Lower leg skin (tissue), 4 donors: ENCODE measurements at regions of chr5 and their contacts with region 1.

Region 1: GRCh38 chr5:50318220-50318619 is 122.9 kb downstream of the EMB start:
- DNase-seq: no peak
- H3K4me3 ChIP-seq: no peak overlapping the region
- CTCF ChIP-seq: no peak
- POLR2A ChIP-seq: no peak

Region 2: DNA sequence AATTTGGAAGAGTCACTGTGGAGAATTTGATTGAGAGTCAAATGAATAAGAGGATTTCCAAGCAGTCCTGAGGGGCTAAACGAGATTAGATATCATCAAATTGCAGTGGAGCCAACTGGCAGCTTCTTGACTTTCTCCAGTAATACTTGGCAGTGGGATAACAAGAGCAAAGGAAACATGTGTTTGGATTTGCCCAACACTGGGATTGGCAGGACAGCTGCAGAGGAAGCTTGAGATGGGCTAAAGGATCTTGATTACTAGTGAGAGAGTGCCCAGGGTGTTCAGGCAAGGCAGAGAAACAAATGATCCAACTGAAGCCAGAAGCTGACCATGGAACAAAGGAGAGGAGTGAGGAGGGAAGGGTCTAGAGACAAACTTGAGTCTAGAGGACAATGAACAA is 709.1 kb after region 1 on chr5:
- intact Hi-C with region 1: loop called (anchors 10 kb)
- DNase-seq: no peak
- H3K4me3 ChIP-seq: no peak overlapping the region
- CTCF ChIP-seq: no peak
- POLR2A ChIP-seq: no peak